H1 (cell line): ENCODE measurements at regions of chr17 and their contacts with region 1.

Region 1: DNA sequence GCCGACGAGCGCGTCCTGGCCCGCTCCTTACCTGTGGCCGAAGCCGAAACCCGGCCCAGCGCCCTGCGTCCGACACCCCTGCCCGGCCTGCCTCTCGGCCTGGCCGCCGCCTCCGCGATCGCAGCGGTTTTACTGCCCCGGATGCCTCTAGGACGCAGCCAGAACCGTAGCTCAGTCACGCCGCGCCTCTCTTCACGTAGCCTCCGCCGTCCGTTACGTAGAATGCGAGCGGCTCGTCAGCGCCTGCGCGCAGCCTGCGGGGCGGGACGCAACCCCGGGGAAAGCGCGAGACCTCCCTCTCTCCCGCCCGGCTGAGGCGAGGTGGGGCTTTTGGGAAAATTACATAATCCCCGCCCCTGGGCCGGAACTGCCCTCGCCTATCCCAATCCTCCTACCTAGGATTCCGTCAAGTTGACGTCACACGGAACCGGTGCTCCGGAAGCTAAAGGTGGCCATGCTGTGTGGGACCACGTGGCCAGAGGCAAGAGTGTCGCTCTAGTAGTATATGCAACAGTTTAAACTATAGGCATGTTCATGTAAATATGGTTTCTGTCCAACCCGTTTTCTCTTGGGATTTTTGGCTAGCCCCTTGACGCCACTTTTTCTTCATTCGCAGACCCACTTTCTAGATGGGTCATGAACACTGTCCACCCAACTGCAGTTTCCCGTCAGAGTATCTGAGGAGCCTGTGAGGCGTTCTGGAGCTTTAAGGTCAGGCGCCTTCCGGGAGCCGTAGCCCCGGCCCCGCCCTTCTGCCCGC is at the start of gene CCDC47:
- DNase-seq: peak; percentile 94 to 97
- H3K4me3 ChIP-seq: peak within 1 kb of the TSS; percentile 84 to 97 (median 94)
- H3K27ac ChIP-seq: peak within 1 kb of the TSS; percentile 99
- H3K4me1 ChIP-seq: no peaks in the 10 kb centered on the region; a peak in 3 of 7 replicates
- H3K27me3 ChIP-seq: no peaks in the 10 kb centered on the region
- CTCF ChIP-seq: no peak
- EP300 ChIP-seq: peak in 1 of 2 experiments; percentile 41; a peak in 1 of 3 replicates
- POLR2A ChIP-seq: peak; percentile 63 to 83
- RAD21 ChIP-seq: no peak
- total RNA-seq, gene CCDC47: 83.1 and 85.3 TPM in 2 replicates

Region 2: DNA sequence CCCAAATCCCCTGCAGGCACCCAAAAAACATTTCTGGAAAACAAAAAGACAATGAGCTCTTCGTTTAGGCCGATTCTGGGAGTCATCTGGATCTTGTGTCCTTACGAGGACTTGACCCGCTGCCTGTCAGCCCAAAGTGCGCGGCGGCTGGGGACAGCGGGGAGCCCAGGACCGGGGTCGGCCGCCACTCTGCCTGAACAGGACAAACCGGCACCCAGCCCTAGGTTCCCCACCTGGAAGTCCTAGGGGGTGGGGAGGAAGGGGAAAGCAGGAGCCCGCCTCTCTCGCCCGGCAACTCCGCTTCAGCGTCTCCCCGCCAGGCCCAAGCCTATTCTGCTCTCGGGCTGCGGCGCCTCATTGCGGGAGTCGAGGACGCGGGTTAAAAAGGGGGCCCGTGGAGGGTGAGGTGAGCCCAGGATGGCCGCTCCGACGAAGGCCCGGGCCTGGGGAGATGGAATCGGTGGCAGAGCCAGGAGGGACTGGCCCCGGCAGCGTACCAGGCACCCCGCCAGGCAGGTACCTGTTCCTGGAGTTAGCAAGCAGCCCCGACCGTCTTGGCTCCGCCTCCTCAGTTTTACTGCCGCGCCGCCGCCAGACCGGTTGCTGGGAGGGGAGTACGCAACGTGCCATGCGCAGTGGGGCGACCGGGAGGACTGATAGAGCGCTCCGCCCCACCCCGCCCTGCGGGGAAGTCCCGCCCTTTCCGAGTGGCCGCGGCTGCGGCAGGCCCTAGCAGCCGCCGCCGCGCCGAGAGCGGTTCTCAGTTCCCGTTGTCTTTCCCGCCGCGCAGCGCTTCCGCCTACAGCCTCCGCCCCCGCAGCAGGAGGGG is 32.1 kb before region 1 on chr17 and contains the start of gene STRADA:
- CTCF ChIA-PET with region 1: no interaction called
- POLR2A ChIA-PET with region 1: interaction called, 26 read pairs
- DNase-seq: peak; percentile 96 to 97
- H3K4me3 ChIP-seq: peak within 1 kb of the TSS; percentile 56 to 95 (median 88)
- H3K27ac ChIP-seq: peak within 1 kb of the TSS; percentile 84
- H3K4me1 ChIP-seq: peaks cover 0 to 3% (median 0%) of the 10 kb centered on the region in 4 experiments; a peak in 2 of 7 replicates
- H3K27me3 ChIP-seq: no peaks in the 10 kb centered on the region
- CTCF ChIP-seq: no peak
- EP300 ChIP-seq: no peak
- POLR2A ChIP-seq: peak in 1 of 2 experiments; percentile 88; a peak in 1 of 3 replicates
- RAD21 ChIP-seq: no peak
- total RNA-seq, gene STRADA: 27.8 and 35.6 TPM in 2 replicates

Region 3: GRCh38 chr17:63760771-63761539 is 12.6 kb before region 1 on chr17:
- CTCF ChIA-PET with region 1: interaction called, 3 read pairs
- POLR2A ChIA-PET with region 1: interaction called, 17 read pairs
- DNase-seq: no peak
- H3K4me3 ChIP-seq: no peak overlapping the region
- H3K27ac ChIP-seq: no peak overlapping the region
- H3K4me1 ChIP-seq: no peaks in the 10 kb centered on the region
- H3K27me3 ChIP-seq: no peaks in the 10 kb centered on the region
- CTCF ChIP-seq: no peak
- EP300 ChIP-seq: no peak
- POLR2A ChIP-seq: no peak
- RAD21 ChIP-seq: no peak

Region 4: GRCh38 chr17:63798572-63799106 is 25.1 kb after region 1 on chr17:
- CTCF ChIA-PET with region 1: interaction called, 3 read pairs
- POLR2A ChIA-PET with region 1: interaction called, 34 read pairs
- DNase-seq: peak in 1 of 2 experiments; percentile 23
- H3K4me3 ChIP-seq: no peak overlapping the region
- H3K27ac ChIP-seq: no peak overlapping the region
- H3K4me1 ChIP-seq: no peaks in the 10 kb centered on the region
- H3K27me3 ChIP-seq: no peaks in the 10 kb centered on the region
- CTCF ChIP-seq: no peak
- EP300 ChIP-seq: no peak
- POLR2A ChIP-seq: no peak
- RAD21 ChIP-seq: no peak

Region 5: GRCh38 chr17:63827002-63827771 is 53.6 kb after region 1 on chr17 and contains the starts of genes FTSJ3 and PSMC5:
- CTCF ChIA-PET with region 1: interaction called, 3 read pairs
- POLR2A ChIA-PET with region 1: interaction called, 481 read pairs
- DNase-seq: peak; percentile 75 to 92
- H3K4me3 ChIP-seq: peak within 1 kb of the TSS; percentile 76 to 99 (median 94)
- H3K27ac ChIP-seq: peak within 1 kb of the TSS; percentile 99
- H3K4me1 ChIP-seq: peaks cover 0 to 3% (median 0%) of the 10 kb centered on the region in 4 experiments; a peak in 1 of 7 replicates
- H3K27me3 ChIP-seq: no peaks in the 10 kb centered on the region
- CTCF ChIP-seq: peak; percentile 46 to 70 (median 67)
- EP300 ChIP-seq: 0 out of 3 replicates have a peak, but pooled peaks of 1 of the 2 experiments have one; percentile 1
- POLR2A ChIP-seq: peak; percentile 87 to 89
- RAD21 ChIP-seq: no peak
- total RNA-seq, gene FTSJ3: 77.2 and 77.4 TPM in 2 replicates
- total RNA-seq, gene PSMC5: 162 and 172 TPM in 2 replicates

Region 6: DNA sequence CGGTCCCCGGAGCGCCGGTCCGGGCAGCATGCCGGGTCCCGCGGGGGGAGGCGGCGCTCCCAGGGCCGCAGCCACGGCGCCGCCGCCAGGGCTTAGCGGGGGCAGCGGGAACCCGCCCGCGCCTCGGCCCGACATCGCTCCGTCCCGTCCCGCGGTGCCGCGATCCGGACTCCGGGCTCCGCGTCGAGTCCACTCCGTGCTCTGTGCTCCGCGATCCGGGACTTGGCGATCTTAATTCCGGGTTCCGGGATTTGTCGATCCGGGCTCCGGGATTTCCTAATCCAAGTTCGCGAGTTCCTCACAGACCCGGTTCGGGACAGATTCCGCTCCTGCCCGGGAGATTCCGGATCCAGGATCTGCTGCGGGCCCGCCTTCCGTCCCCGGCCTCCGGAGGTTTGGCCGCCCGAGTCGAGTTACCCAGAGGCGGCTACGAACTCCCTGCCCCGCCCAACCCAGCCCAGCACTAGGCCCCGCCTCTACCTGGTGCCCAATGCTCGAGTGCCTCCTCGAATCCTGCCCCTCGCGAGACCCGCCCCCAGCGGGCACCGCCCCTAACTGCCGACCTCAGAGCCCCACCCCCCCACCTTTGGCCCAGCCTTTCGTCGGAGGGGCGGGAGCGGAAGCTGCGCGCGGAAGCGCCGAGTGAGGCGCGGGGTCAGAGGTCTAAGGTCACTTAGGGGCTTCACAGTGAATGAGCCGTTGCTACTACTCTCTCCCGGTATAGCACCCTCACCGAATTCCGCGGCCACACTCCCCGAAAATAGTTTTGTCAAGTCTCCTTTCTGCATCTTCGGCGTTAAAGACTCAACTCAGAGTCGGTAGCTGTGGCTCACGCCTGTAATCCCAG is 69.2 kb after region 1 on chr17 and contains the start of gene SMARCD2:
- CTCF ChIA-PET with region 1: no interaction called
- POLR2A ChIA-PET with region 1: interaction called, 481 read pairs
- DNase-seq: peak; percentile 97
- H3K4me3 ChIP-seq: peak within 1 kb of the TSS; percentile 76 to 97 (median 83)
- H3K27ac ChIP-seq: peak within 1 kb of the TSS; percentile 65; the same call in 1 of the 2 replicates
- H3K4me1 ChIP-seq: peaks cover 3 to 26% (median 24%) of the 10 kb centered on the region in 4 experiments
- H3K27me3 ChIP-seq: peaks cover 0 to 16% (median 10%) of the 10 kb centered on the region in 4 experiments; a peak in 6 of 7 replicates
- CTCF ChIP-seq: no peak
- EP300 ChIP-seq: peak in 1 of 2 experiments; percentile 89; a peak in 2 of 3 replicates
- POLR2A ChIP-seq: peak in 1 of 2 experiments; percentile 43; a peak in 1 of 3 replicates
- RAD21 ChIP-seq: no peak
- total RNA-seq, gene SMARCD2: 84.6 and 92.2 TPM in 2 replicates

Region 7: GRCh38 chr17:63911657-63912426 is 138.3 kb after region 1 on chr17:
- CTCF ChIA-PET with region 1: no interaction called
- POLR2A ChIA-PET with region 1: no interaction called
- DNase-seq: peak in 1 of 2 experiments; percentile 87
- H3K4me3 ChIP-seq: no peak overlapping the region
- H3K27ac ChIP-seq: no peak overlapping the region
- H3K4me1 ChIP-seq: peaks cover 0 to 2% (median under 1%) of the 10 kb centered on the region in 4 experiments; a peak in 2 of 7 replicates
- H3K27me3 ChIP-seq: no peaks in the 10 kb centered on the region
- CTCF ChIP-seq: peak; percentile 63 to 83 (median 69)
- EP300 ChIP-seq: no peak
- POLR2A ChIP-seq: no peak
- RAD21 ChIP-seq: peak; percentile 62 to 65